A549 (cell line): ENCODE measurements at regions of chr12 and their contacts with region 1.

Region 1: DNA sequence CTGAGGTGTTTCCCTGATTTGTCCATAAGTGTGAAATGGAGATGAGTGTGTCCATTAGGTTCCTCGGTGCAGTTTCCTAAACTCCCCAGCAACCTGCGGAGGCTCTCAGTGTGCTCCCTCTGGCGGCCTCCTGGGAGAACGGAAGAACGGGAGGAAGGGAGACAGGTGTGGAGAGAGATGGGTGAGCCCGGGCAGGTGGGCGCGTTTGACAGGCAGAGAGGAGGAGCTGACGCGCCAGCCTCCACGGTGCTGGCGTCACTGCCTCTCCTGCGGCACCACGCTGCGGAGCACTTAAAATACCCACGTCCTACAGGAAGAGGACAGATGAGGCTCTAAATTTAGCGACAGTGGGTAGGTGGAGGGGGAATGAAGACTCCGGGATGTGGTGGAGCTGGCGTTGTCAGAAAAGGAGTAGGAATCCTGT is 26.8 kb upstream of the PEX5 start:
- DNase-seq: peak; percentile 56 to 66
- ATAC-seq: peak; percentile 84 to 90
- H3K4me3 ChIP-seq: no peak overlapping the region
- H3K27ac ChIP-seq: no peak overlapping the region
- H3K4me1 ChIP-seq: 0 out of 3 replicates have a peak, but pooled peaks cover 4% of the 10 kb centered on the region
- CTCF ChIP-seq: peak; percentile 45
- EP300 ChIP-seq: no peak
- POLR2A ChIP-seq: no peak
- RAD21 ChIP-seq: peak in 1 of 2 experiments; percentile 42; a peak in 3 of 5 replicates

Region 2: DNA sequence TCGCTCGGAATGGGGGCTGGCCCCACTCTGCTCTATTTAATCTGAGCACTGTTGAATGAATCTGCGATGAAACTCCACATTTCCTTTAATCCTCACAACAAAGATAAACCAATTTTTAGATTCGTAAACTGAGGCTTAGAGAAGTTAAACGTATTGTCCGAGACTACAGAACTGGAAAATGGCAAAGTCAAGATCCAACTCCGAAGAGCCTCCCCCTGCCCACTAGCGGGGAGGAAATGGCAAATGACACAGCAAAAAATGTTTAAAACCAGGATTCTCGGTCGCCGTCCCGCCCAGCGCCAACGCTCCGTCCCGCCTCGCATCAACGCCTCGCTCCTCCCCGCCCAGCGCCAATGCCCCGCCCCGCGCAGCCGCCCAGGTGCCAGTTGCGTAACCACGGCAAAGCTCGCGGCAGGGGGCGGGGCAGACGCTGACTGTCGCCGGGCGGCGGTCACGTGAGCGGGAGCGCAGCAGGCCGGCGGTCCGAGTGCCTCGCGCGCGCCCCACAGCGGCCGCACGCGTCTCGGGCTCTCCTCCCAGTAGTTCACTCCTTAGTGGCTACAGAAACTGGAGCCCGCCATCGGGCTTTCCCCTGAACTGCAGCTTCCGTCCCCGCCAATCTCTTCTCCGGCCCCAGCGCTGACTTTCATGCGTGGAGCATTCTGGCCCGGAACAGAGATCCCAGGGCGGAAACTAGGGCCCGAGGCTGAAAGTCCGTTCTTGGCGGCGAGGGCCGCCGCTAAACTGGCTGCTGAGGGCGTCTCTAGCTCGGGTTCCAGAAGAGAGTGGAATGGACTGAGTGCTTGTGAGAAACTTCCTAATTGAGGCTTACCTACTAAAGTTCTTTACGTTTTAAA is 271.7 kb before region 1 on chr12:
- CTCF ChIA-PET with region 1: no interaction called
- POLR2A ChIA-PET with region 1: no interaction called
- DNase-seq: peak; percentile 93 to 99
- ATAC-seq: peak; percentile 95 to 96
- H3K4me3 ChIP-seq: peak overlapping the region; percentile 40
- H3K27ac ChIP-seq: peak overlapping the region; percentile 94 to 98
- H3K4me1 ChIP-seq: peaks cover 38% of the 10 kb centered on the region
- CTCF ChIP-seq: peak; percentile 95
- EP300 ChIP-seq: peak in 1 of 2 experiments; percentile 54; a peak in 1 of 5 replicates
- POLR2A ChIP-seq: peak; percentile 70
- RAD21 ChIP-seq: peak; percentile 69 to 94

Region 3: GRCh38 chr12:7180685-7181084 is 18.0 kb after region 1 on chr12:
- CTCF ChIA-PET with region 1: interaction called, 11 read pairs
- POLR2A ChIA-PET with region 1: no interaction called
- DNase-seq: no peak
- ATAC-seq: no peak
- H3K4me3 ChIP-seq: no peak overlapping the region
- H3K27ac ChIP-seq: no peak overlapping the region
- H3K4me1 ChIP-seq: no peaks in the 10 kb centered on the region
- CTCF ChIP-seq: no peak
- EP300 ChIP-seq: no peak
- POLR2A ChIP-seq: no peak
- RAD21 ChIP-seq: no peak